OCI-LY7 (cell line): ENCODE measurements at regions of chr1 and their contacts with region 1.

Region 1: DNA sequence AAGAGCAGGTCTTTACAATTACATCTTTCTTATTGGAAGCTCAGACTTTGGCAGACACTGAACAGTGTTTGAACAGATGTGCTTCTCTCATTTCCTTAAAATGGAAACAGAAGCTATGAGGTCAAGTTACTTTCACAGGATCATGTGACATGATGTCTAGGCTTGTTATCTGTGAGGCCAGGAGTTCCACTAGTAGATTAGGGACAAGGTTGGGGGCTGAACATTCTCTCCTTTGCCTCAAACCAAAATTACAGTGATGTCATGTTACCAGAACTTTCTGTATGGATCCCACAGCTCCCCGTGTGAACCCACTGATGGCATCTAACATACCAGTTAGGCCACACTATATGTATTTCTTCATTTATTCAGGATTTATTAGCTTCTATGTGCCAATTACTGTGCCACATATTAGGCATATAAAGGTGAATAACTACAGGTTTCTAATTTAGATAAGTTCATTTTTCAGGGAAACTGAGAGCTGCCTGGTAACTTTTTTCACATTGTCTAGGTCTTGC is 6.0 kb downstream of the DYNLT5 start:
- DNase-seq: peak; percentile 87
- H3K4me3 ChIP-seq: peak overlapping the region; percentile 45
- H3K27ac ChIP-seq: peak overlapping the region; percentile 83
- H3K4me1 ChIP-seq: peaks cover 38% of the 10 kb centered on the region
- CTCF ChIP-seq: no peak

Region 2: GRCh38 chr1:66747501-66747900 is 10.8 kb before region 1 on chr1:
- CTCF ChIA-PET with region 1: no interaction called
- POLR2A ChIA-PET with region 1: interaction called, 18 read pairs
- intact Hi-C with region 1: no loop called
- DNase-seq: no peak
- H3K4me3 ChIP-seq: no peak overlapping the region
- H3K27ac ChIP-seq: no peak overlapping the region
- H3K4me1 ChIP-seq: no peaks in the 10 kb centered on the region
- CTCF ChIP-seq: no peak